ENCODE measurements at regions of chr20 and their contacts with region 1.

Region 1: GRCh38 chr20:6994452-6994851 is 227.0 kb downstream of the BMP2 start:
- DNase-seq: peak; percentile 93
- H3K4me3 Mint-ChIP-seq: peak overlapping the region; percentile 45
- H3K27ac Mint-ChIP-seq: peak overlapping the region; percentile 98
- H3K4me1 Mint-ChIP-seq: peaks cover 47% of the 10 kb centered on the region
- H3K27me3 Mint-ChIP-seq: no peaks in the 10 kb centered on the region
- CTCF ChIP-seq: no peak

Region 2: DNA sequence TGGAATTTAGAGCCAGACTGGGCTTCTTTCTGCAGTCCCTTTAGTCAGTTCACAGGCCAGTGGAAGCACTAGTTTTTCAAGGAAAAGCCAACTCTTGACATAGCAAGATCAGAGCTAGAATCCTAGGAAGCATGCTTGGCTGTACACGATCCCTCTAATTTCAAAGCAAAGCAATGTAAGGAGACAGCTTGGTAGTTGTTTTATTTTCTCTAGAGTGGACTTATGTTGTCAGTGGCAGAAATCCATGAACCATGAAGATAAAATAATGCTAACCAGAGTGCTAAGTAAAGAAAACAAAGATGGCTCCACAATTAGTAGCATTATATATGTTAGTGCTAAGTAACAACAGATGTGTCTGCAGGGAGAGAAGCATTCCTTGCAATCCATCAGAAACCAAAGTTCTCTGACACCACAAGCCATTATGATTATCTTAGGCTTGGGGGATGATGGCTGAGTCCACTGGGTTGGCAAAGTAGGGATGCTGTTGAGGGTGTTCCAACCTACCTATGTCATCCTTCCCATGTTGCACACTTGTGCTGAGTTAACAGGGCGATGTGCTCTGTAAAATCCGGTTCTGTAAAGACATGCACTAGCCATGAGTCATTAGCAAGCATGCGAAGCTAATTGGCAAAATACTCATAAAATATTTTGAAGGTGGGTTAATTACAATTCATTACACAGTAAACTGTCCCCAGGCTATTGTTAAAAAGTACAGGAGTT is 111.7 kb before region 1 on chr20:
- CTCF ChIA-PET with region 1: no interaction called
- POLR2A ChIA-PET with region 1: interaction called, 10 read pairs
- intact Hi-C with region 1: no loop called
- DNase-seq: peak; percentile 54
- H3K4me3 Mint-ChIP-seq: no peak overlapping the region
- H3K27ac Mint-ChIP-seq: no peak overlapping the region
- H3K4me1 Mint-ChIP-seq: peaks cover 13% of the 10 kb centered on the region
- H3K27me3 Mint-ChIP-seq: no peaks in the 10 kb centered on the region
- CTCF ChIP-seq: no peak

Region 3: DNA sequence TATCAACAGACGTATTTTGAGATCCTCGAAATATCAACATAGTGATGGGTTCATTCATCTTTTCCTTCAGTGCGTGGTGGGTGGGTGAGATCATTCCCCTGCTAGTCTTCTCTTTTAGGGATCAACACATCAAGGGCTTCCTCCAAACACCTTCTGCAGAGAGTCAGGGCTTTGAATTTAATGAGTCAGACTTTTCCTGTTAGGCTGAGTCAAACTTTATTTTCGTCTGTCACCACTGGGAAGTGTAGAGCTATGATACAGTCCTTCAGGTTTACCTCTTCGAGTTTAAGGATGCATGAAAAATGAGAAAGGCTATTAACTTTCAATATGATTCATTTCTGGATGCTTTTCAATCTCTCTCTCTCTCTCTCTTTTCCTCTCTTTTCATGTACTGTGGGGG is 37.9 kb before region 1 on chr20:
- CTCF ChIA-PET with region 1: interaction called, 3 read pairs
- POLR2A ChIA-PET with region 1: interaction called, 27 read pairs
- intact Hi-C with region 1: no loop called
- DNase-seq: peak; percentile 68
- H3K4me3 Mint-ChIP-seq: no peak overlapping the region
- H3K27ac Mint-ChIP-seq: peak overlapping the region; percentile 43
- H3K4me1 Mint-ChIP-seq: peaks cover 28% of the 10 kb centered on the region
- H3K27me3 Mint-ChIP-seq: no peaks in the 10 kb centered on the region
- CTCF ChIP-seq: no peak

Region 4: GRCh38 chr20:6979621-6980020 is 14.8 kb before region 1 on chr20:
- CTCF ChIA-PET with region 1: interaction called, 4 read pairs
- POLR2A ChIA-PET with region 1: interaction called, 25 read pairs
- intact Hi-C with region 1: no loop called
- DNase-seq: no peak
- H3K4me3 Mint-ChIP-seq: no peak overlapping the region
- H3K27ac Mint-ChIP-seq: no peak overlapping the region
- H3K4me1 Mint-ChIP-seq: no peaks in the 10 kb centered on the region
- H3K27me3 Mint-ChIP-seq: no peaks in the 10 kb centered on the region
- CTCF ChIP-seq: no peak

Region 5: DNA sequence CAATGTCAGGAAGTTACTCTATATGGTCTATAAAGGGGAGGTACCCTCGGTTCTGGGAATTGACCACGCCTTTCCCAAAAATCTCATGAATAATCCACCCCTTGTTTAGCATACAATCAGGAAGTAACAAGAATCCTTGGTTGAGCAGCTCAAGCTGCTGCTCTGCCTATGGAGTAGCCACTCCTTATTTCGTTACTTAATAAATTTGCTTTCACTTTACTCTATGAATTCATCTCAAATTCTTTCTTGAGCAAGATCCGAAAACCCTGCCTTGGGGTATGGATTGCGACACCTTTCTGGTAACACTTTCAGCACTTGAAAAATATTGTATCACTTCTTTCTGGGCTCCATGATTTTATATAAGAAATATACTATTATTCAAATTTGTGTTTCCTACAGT is 16.1 kb after region 1 on chr20:
- CTCF ChIA-PET with region 1: interaction called, 12 read pairs
- POLR2A ChIA-PET with region 1: interaction called, 23 read pairs
- intact Hi-C with region 1: no loop called
- DNase-seq: peak; percentile 91
- H3K4me3 Mint-ChIP-seq: peak overlapping the region; percentile 7
- H3K27ac Mint-ChIP-seq: peak overlapping the region; percentile 91
- H3K4me1 Mint-ChIP-seq: peaks cover 11% of the 10 kb centered on the region
- H3K27me3 Mint-ChIP-seq: no peaks in the 10 kb centered on the region
- CTCF ChIP-seq: no peak

Region 6: DNA sequence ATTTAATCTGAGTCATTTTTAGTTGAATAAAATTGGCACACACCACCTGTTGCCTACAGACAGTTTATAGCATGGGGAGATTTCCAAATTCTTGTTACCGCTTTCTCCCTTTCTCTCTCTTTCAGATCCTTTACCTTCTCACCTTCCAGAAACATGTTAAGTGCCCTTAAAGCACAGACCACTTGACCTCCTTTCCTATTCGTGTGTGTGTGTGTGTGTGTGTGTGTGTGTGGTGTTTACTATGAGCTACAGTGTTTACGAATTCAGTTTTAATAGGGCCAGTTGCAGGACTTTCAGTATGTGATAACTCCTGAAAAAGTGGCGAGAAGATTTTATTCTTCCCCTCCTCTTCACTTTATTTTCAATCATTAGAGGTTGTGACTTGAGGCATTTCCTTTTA is 31.2 kb after region 1 on chr20:
- CTCF ChIA-PET with region 1: no interaction called
- POLR2A ChIA-PET with region 1: no interaction called
- intact Hi-C with region 1: no loop called
- DNase-seq: no peak
- H3K4me3 Mint-ChIP-seq: no peak overlapping the region
- H3K27ac Mint-ChIP-seq: no peak overlapping the region
- H3K4me1 Mint-ChIP-seq: no peaks in the 10 kb centered on the region
- H3K27me3 Mint-ChIP-seq: no peaks in the 10 kb centered on the region
- CTCF ChIP-seq: no peak

Region 7: DNA sequence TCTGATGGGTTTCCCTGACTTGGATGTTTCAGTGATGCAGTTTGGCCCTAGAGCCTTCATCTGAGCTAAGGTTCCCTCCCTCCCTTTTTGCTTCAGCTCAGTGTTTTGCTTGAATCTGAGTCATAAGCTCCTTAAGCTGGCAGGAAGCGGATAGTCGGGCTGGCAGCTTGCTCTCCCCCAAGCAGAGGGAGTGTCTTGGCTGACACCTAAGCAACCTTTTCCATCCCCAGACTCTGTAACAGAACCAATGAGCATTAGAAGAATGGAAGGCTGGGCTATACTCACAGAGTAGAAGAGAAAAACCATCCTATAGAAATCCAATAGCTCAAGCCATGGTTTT is 847.5 kb after region 1 on chr20:
- CTCF ChIA-PET with region 1: no interaction called
- POLR2A ChIA-PET with region 1: no interaction called
- intact Hi-C with region 1: loop called (anchors 5 kb)
- DNase-seq: peak; percentile 95
- H3K4me3 Mint-ChIP-seq: no peak overlapping the region
- H3K27ac Mint-ChIP-seq: peak overlapping the region; percentile 90
- H3K4me1 Mint-ChIP-seq: peaks cover 32% of the 10 kb centered on the region
- H3K27me3 Mint-ChIP-seq: no peaks in the 10 kb centered on the region
- CTCF ChIP-seq: no peak

Measured in MCF 10A (cell line).